Activated naive CD8-positive, alpha-beta T cell treated with anti-CD3 and anti-CD28 coated beads, Interleukin-2, amount 10 ng/mL, durations not matched to agents 7 days and 5 days (primary cell): ENCODE measurements at regions of chr1 and their contacts with region 1.

Region 1: DNA sequence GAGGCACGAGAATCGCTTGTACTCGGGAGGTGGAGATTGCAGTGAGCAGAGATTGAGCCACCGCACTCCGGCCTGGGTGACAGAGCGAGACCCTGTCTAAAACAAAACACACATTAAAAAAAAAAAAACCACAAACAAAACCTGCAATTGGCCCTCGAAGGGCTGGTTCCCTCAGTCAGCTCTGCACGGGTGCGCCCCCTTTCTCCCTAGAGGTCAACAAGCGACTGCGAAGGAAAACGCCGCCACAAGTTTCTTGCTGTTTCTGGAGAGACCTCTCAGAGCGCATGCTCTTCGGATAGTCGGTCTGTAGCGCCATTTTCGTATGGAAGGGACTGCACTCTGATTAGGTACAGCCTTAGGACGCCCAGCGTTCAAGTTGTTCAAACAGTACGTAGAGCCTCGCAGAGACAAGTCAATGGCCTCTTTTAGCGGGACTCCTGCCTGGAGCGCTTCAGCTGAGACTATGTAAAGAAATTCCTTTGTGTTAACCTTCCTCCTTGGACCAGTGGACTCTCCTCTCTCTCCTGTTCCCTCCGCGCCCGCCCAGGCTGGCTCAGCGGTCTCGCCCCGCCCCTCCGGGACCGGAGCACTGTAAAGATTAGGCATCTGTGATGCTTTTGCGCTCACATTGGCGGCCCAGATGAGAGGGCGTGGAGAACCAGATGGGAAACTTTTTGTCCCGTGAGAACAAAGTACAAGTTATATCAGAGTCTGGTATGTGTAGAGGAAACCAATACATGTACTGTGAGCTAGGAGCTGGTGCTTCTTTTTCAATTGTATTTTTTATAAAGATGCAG is 1.0 kb upstream of the CDC14A start:
- DNase-seq: peak; percentile 88
- ATAC-seq: peak; percentile 74
- H3K4me3 Mint-ChIP-seq: peak overlapping the region; percentile 89
- H3K27ac Mint-ChIP-seq: peak overlapping the region; percentile 96
- H3K4me1 Mint-ChIP-seq: peaks cover 32% of the 10 kb centered on the region
- H3K27me3 Mint-ChIP-seq: no peaks in the 10 kb centered on the region

Region 2: DNA sequence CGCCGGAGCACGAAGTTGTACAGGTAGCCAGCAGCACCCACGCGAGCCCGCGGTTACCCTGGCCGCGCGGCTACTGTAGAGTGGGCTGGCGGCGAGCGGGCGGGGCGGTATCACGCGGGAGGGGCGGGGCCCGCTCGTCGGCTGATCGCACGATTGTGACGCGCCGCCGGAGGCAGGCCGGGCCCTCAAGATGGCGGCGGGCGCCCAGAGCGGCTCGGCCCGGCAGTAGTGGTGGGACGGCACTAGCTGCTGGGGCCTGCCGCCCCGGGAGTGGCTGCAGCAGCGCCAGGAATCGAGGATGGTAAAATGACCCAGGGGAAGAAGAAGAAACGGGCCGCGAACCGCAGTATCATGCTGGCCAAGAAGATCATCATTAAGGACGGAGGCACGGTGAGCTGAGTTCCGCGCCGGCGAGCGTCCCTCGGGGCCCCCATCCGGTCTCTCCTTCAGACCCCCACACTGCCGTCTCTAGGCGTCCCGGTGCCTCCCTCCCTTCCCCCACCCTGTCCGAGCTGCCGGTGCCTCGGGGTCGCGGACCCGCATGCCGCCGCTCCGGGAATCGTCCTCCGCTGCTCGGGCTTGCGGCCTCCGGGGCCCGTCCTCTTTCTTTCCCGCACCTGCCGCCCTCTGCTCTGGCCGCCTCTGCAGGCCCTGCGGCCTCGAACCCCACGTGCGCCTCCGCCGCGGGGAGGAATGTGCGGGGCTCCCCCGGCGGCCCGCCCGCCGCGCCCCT is 313.2 kb before region 1 on chr1:
- POLR2A ChIA-PET with region 1: interaction called, 10 read pairs
- DNase-seq: peak; percentile 94
- ATAC-seq: peak; percentile 87
- H3K4me3 Mint-ChIP-seq: peak overlapping the region; percentile 97
- H3K27ac Mint-ChIP-seq: peak overlapping the region; percentile 100
- H3K4me1 Mint-ChIP-seq: peaks cover 41% of the 10 kb centered on the region
- H3K27me3 Mint-ChIP-seq: no peaks in the 10 kb centered on the region

Region 3: GRCh38 chr1:100051401-100051800 is 299.9 kb before region 1 on chr1:
- POLR2A ChIA-PET with region 1: no interaction called
- DNase-seq: no peak
- ATAC-seq: no peak
- H3K4me3 Mint-ChIP-seq: no peak overlapping the region
- H3K27ac Mint-ChIP-seq: no peak overlapping the region
- H3K4me1 Mint-ChIP-seq: peaks cover 26% of the 10 kb centered on the region
- H3K27me3 Mint-ChIP-seq: no peaks in the 10 kb centered on the region

Region 4: GRCh38 chr1:100265931-100266740 is 85.2 kb before region 1 on chr1 and contains the start of gene RTCA:
- POLR2A ChIA-PET with region 1: interaction called, 48 read pairs
- DNase-seq: peak; percentile 95
- ATAC-seq: peak; percentile 93
- H3K4me3 Mint-ChIP-seq: peak within 1 kb of the TSS; percentile 94
- H3K27ac Mint-ChIP-seq: peak within 1 kb of the TSS; percentile 96
- H3K4me1 Mint-ChIP-seq: peaks cover 21% of the 10 kb centered on the region
- H3K27me3 Mint-ChIP-seq: no peaks in the 10 kb centered on the region
- total RNA-seq, gene RTCA: 47.7 to 48.1 TPM

Region 5: GRCh38 chr1:100308777-100309176 is 42.5 kb before region 1 on chr1:
- POLR2A ChIA-PET with region 1: no interaction called
- DNase-seq: no peak
- ATAC-seq: no peak
- H3K4me3 Mint-ChIP-seq: no peak overlapping the region
- H3K27ac Mint-ChIP-seq: no peak overlapping the region
- H3K4me1 Mint-ChIP-seq: peaks cover 6% of the 10 kb centered on the region
- H3K27me3 Mint-ChIP-seq: no peaks in the 10 kb centered on the region

Region 6: GRCh38 chr1:100322436-100323211 is 28.7 kb before region 1 on chr1:
- POLR2A ChIA-PET with region 1: no interaction called
- DNase-seq: no peak
- ATAC-seq: no peak
- H3K4me3 Mint-ChIP-seq: no peak overlapping the region
- H3K27ac Mint-ChIP-seq: no peak overlapping the region
- H3K4me1 Mint-ChIP-seq: peaks cover 6% of the 10 kb centered on the region
- H3K27me3 Mint-ChIP-seq: no peaks in the 10 kb centered on the region

Region 7: GRCh38 chr1:100387209-100387608 is 35.9 kb after region 1 on chr1:
- POLR2A ChIA-PET with region 1: interaction called, 16 read pairs
- DNase-seq: no peak
- ATAC-seq: no peak
- H3K4me3 Mint-ChIP-seq: peak overlapping the region; percentile 72
- H3K27ac Mint-ChIP-seq: peak overlapping the region; percentile 72
- H3K4me1 Mint-ChIP-seq: peaks cover 26% of the 10 kb centered on the region
- H3K27me3 Mint-ChIP-seq: no peaks in the 10 kb centered on the region

Region 8: DNA sequence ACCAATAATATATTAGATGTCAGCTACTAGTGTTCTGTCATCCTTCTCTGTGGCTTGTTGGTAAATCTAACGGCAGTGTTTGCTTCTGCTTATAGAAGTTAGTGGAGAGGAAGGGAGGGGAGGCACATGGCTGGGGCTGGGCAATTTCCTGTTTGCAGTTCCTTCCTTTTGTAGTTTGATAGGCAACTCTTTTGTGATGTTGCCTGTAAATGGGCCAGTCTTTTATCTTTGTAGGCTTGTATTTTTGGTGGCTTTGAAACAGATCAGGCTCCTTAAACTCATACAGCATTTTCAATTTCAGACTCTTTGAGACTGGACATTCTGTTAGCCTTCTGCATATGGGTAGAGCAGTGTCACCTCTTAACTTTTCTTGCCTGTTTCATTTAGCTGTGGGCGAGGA is 49.1 kb after region 1 on chr1:
- POLR2A ChIA-PET with region 1: interaction called, 24 read pairs
- DNase-seq: no peak
- ATAC-seq: peak; percentile 90
- H3K4me3 Mint-ChIP-seq: peak overlapping the region; percentile 59
- H3K27ac Mint-ChIP-seq: peak overlapping the region; percentile 91
- H3K4me1 Mint-ChIP-seq: peaks cover 59% of the 10 kb centered on the region
- H3K27me3 Mint-ChIP-seq: no peaks in the 10 kb centered on the region

Region 9: GRCh38 chr1:100443811-100444571 is 92.7 kb after region 1 on chr1:
- POLR2A ChIA-PET with region 1: interaction called, 24 read pairs
- DNase-seq: no peak
- ATAC-seq: peak; percentile 59
- H3K4me3 Mint-ChIP-seq: peak overlapping the region; percentile 86
- H3K27ac Mint-ChIP-seq: peak overlapping the region; percentile 95
- H3K4me1 Mint-ChIP-seq: peaks cover 54% of the 10 kb centered on the region
- H3K27me3 Mint-ChIP-seq: no peaks in the 10 kb centered on the region

Region 10: GRCh38 chr1:100892554-100892953 is 541.3 kb after region 1 on chr1:
- POLR2A ChIA-PET with region 1: interaction called, 10 read pairs
- DNase-seq: no peak
- ATAC-seq: no peak
- H3K4me3 Mint-ChIP-seq: no peak overlapping the region
- H3K27ac Mint-ChIP-seq: no peak overlapping the region
- H3K4me1 Mint-ChIP-seq: peaks cover 21% of the 10 kb centered on the region
- H3K27me3 Mint-ChIP-seq: no peaks in the 10 kb centered on the region